Right ventricle myocardium inferior (tissue), 1 donor: ENCODE measurements at regions of chr4 and their contacts with region 1.

Region 1: DNA sequence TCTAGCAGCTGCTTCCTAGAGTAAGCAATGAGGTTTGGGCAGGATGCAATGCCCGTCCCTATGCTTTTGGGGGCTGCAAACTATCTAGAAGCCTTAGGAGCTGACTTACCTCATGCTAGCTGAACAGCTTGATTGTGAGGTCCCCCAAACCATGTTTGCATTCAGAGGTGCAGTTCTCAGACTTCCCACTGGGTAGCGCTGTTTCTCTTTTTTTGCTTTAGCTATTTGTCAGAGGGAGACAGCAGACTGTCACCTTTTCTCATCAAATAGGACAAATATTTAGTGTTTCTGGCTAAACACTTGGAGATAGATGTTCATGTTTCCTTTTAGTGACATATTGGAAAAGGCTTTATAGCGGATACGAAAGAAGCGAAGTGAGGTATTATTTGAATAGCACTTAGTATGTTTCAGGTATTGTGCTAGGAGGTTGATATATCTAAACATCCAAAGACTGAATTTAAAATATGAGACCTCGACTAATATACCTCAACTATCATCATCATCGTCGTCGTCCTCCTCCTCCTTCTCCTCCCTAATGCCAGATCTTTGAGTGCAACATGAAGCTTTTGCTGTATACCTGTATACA is 18.7 kb upstream of the TMEM192 start:
- DNase-seq: no peak
- ATAC-seq: peak; percentile 69

Region 2: DNA sequence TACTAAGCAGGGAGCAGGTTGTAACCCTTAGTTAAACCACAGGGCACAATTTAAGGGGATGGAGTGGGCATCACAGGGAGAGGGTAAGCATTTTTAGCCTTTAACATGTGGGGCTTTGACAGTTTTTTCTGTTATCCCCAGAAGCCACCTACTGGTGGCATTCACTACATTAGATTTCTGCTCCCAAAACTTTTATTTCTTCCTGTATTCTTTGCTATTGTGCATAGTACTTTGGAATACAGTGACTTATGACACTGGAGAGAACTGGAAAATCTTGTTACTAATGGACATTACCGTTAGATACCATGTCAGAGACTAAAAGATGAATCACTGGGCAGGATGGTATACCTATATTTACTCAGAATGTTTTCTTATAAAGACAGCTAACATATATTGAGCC is 70.4 kb before region 1 on chr4:
- intact Hi-C with region 1: no loop called
- DNase-seq: no peak
- ATAC-seq: no peak

Region 3: DNA sequence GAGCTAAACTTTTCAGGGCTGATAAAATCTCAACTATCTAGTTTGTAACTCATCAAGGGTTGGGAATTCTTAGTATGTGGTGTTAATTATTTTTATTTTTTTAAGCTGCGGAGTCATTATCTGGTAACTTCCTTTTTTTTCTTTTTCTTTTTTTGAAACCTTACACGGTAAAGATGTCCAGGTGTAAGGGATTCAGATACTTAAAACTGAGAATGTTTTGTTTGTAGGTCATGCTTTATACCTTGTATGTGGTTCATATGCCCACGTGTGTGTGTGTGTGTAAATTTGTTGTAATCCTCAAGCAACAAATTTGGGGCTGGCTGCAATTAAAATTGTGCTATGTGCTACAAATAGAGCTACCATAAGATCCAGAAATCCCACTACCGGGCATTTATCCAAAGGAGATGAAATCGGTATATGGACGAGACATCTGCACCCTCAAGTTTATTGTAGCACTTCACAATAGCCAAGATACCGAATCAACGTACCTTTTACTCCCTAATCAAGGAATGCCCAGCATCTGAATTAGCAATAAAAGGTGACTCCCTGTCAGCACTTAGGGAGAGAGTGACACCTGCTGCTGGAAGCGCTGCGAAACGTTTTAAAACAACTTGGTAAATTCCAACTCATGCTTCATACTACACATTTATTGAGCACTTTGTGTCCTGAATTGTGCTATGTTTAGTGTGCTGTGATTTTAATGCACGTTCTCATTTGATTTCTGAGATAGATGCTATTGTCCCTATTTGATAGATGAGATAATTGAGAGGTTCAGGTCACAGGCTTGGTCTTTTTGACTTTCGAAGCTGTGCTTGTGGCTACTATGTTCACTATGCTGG is 212.2 kb after region 1 on chr4:
- intact Hi-C with region 1: loop called (anchors 5 kb)
- DNase-seq: no peak
- ATAC-seq: no peak

Region 4: DNA sequence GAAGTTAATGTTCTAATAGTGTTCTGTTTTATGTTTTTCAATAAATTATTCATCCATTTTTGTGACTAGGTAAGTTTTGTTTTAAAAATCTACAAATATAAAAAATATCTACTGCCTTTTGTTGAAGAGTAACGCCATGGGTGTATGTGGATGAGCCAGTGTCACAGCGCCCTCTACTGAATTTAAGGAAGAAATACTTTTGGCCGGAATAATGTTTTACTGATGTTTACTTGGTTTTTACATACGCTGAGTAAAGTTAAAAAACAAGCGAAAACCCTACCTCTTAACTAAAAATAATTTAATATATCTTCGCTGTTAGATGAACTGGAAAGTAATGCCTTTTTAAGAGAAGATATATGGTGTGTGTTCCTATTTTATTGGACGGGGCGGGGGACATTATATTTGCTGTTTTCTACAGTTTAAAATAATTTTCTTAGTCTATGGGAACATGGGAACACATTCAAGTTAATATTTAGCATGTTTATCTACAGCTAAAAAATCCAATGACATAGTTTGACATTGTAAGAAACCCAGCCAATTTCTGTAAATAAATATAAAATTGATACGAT is 333.6 kb after region 1 on chr4:
- intact Hi-C with region 1: loop called (anchors 1 kb)
- DNase-seq: no peak
- ATAC-seq: no peak